ENCODE measurements at regions of chr15 and their contacts with region 1.

Region 1: GRCh38 chr15:45205192-45205591 is 17.4 kb upstream of the SHF start:
- DNase-seq: peak; percentile 76
- H3K4me3 Mint-ChIP-seq: no peak overlapping the region
- H3K27ac Mint-ChIP-seq: no peak overlapping the region
- H3K4me1 Mint-ChIP-seq: peaks cover 7% of the 10 kb centered on the region
- H3K27me3 Mint-ChIP-seq: peaks cover 32% of the 10 kb centered on the region

Region 2: GRCh38 chr15:45279024-45279698 is 74.0 kb after region 1 on chr15:
- CTCF ChIA-PET with region 1: interaction called, 19 read pairs
- DNase-seq: peak; percentile 95
- H3K4me3 Mint-ChIP-seq: peak overlapping the region; percentile 79
- H3K27ac Mint-ChIP-seq: peak overlapping the region; percentile 26
- H3K4me1 Mint-ChIP-seq: peaks cover 27% of the 10 kb centered on the region
- H3K27me3 Mint-ChIP-seq: peaks cover 8% of the 10 kb centered on the region

Region 3: GRCh38 chr15:45391746-45392583 is 186.8 kb after region 1 on chr15:
- CTCF ChIA-PET with region 1: interaction called, 10 read pairs
- DNase-seq: no peak
- H3K4me3 Mint-ChIP-seq: no peak overlapping the region
- H3K27ac Mint-ChIP-seq: no peak overlapping the region
- H3K4me1 Mint-ChIP-seq: no peaks in the 10 kb centered on the region
- H3K27me3 Mint-ChIP-seq: peaks cover 13% of the 10 kb centered on the region

Region 4: GRCh38 chr15:45402162-45402954 is 197.2 kb after region 1 on chr15:
- CTCF ChIA-PET with region 1: interaction called, 17 read pairs
- DNase-seq: peak; percentile 97
- H3K4me3 Mint-ChIP-seq: peak overlapping the region; percentile 97
- H3K27ac Mint-ChIP-seq: peak overlapping the region; percentile 94
- H3K4me1 Mint-ChIP-seq: peaks cover 42% of the 10 kb centered on the region
- H3K27me3 Mint-ChIP-seq: no peaks in the 10 kb centered on the region